GM23248 (cell line): ENCODE measurements at regions of chr9 and their contacts with region 1.

Region 1: GRCh38 chr9:124040935-124041816 is 29.6 kb downstream of the LHX2 start:
- DNase-seq: peak; percentile 44
- H3K4me3 ChIP-seq: peak overlapping the region; percentile 71
- H3K27ac ChIP-seq: no peak overlapping the region
- H3K4me1 ChIP-seq: peaks cover 10% of the 10 kb centered on the region; the same call in 1 of the 2 replicates
- H3K27me3 ChIP-seq: peaks cover 44% of the 10 kb centered on the region

Region 2: DNA sequence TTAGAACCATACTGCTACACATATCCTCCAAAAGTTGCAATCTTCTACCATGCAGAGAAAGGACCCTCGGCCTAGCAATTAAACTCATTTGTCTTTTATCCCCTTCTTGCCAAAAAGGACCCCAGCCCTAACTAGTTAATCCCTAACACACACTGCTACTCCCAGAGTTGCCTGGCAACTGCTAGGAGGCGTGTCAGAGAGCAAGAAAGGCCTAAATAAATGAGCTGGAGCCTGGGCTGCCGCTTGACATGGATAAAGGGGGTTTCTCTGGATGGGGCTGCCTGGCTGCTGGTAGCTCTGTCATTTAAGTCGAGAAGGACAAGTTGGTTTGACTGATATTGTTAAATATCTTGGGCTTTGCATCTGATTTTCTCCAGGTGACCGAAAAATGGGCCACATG is 490.4 kb before region 1 on chr9:
- in situ Hi-C with region 1: loop called (anchors 10 kb)
- DNase-seq: no peak
- H3K4me3 ChIP-seq: no peak overlapping the region
- H3K27ac ChIP-seq: no peak overlapping the region
- H3K4me1 ChIP-seq: no peaks in the 10 kb centered on the region
- H3K27me3 ChIP-seq: no peaks in the 10 kb centered on the region

Region 3: GRCh38 chr9:123724211-123724796 is 316.9 kb before region 1 on chr9:
- in situ Hi-C with region 1: loop called (anchors 10 kb)
- DNase-seq: peak; percentile 69
- H3K4me3 ChIP-seq: no peak overlapping the region
- H3K27ac ChIP-seq: no peak overlapping the region
- H3K4me1 ChIP-seq: peaks cover 6% of the 10 kb centered on the region; the same call in 1 of the 2 replicates
- H3K27me3 ChIP-seq: no peaks in the 10 kb centered on the region